ENCODE measurements at regions of chr17 and their contacts with region 1.

Region 1: DNA sequence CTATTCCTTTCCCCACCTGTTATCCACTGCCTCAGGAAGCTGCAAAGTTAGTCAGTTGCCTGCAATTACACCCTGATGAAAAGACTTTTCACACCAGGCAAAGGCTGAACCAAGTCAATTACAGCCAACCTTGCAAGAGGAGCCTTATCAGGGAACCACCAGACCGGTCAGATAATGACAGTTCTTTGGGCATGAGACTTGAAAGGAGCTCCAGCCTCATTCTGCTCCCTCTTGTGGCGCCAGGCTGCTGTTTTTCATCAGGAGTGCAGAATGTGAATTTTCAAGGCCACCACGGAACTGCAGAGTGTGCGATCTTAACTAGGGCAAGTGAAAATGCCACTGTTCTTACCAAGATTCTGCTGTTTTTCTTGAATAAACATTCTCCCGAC is 22.5 kb downstream of the DNAI2 start:
- DNase-seq: peak; percentile 48
- H3K4me3 Mint-ChIP-seq: no peak overlapping the region
- H3K27ac Mint-ChIP-seq: no peak overlapping the region
- H3K4me1 Mint-ChIP-seq: peaks cover 14% of the 10 kb centered on the region
- H3K27me3 Mint-ChIP-seq: no peaks in the 10 kb centered on the region

Region 2: GRCh38 chr17:74280093-74280513 is 16.4 kb before region 1 on chr17:
- CTCF ChIA-PET with region 1: interaction called, 18 read pairs
- intact Hi-C with region 1: no loop called
- DNase-seq: peak; percentile 74
- H3K4me3 Mint-ChIP-seq: no peak overlapping the region
- H3K27ac Mint-ChIP-seq: peak overlapping the region; percentile 69
- H3K4me1 Mint-ChIP-seq: peaks cover 34% of the 10 kb centered on the region
- H3K27me3 Mint-ChIP-seq: no peaks in the 10 kb centered on the region

Region 3: GRCh38 chr17:74354123-74354522 is 57.6 kb after region 1 on chr17:
- CTCF ChIA-PET with region 1: interaction called, 7 read pairs
- intact Hi-C with region 1: loop called (anchors 1 kb)
- DNase-seq: peak; percentile 79
- H3K4me3 Mint-ChIP-seq: no peak overlapping the region
- H3K27ac Mint-ChIP-seq: no peak overlapping the region
- H3K4me1 Mint-ChIP-seq: peaks cover 6% of the 10 kb centered on the region
- H3K27me3 Mint-ChIP-seq: peaks cover 44% of the 10 kb centered on the region

Measured in activated naive CD4-positive, alpha-beta T cell treated with anti-CD3 and anti-CD28 coated beads for 36 hours (primary cell).